ENCODE measurements at regions of chr14 and their contacts with region 1.

Region 1: GRCh38 chr14:75307700-75308379 is 29.2 kb downstream of the FOS start:
- DNase-seq: peak; percentile 77
- ATAC-seq: peak; percentile 59
- H3K4me3 Mint-ChIP-seq: no peak overlapping the region
- H3K27ac Mint-ChIP-seq: no peak overlapping the region
- H3K4me1 Mint-ChIP-seq: peaks cover 37% of the 10 kb centered on the region
- H3K27me3 Mint-ChIP-seq: peaks cover 3% of the 10 kb centered on the region

Region 2: GRCh38 chr14:75293920-75294642 is 13.8 kb before region 1 on chr14:
- CTCF ChIA-PET with region 1: interaction called, 17 read pairs
- DNase-seq: peak; percentile 95
- ATAC-seq: peak; percentile 90
- H3K4me3 Mint-ChIP-seq: peak overlapping the region; percentile 76
- H3K27ac Mint-ChIP-seq: peak overlapping the region; percentile 81
- H3K4me1 Mint-ChIP-seq: peaks cover 21% of the 10 kb centered on the region
- H3K27me3 Mint-ChIP-seq: peaks cover 22% of the 10 kb centered on the region

Region 3: DNA sequence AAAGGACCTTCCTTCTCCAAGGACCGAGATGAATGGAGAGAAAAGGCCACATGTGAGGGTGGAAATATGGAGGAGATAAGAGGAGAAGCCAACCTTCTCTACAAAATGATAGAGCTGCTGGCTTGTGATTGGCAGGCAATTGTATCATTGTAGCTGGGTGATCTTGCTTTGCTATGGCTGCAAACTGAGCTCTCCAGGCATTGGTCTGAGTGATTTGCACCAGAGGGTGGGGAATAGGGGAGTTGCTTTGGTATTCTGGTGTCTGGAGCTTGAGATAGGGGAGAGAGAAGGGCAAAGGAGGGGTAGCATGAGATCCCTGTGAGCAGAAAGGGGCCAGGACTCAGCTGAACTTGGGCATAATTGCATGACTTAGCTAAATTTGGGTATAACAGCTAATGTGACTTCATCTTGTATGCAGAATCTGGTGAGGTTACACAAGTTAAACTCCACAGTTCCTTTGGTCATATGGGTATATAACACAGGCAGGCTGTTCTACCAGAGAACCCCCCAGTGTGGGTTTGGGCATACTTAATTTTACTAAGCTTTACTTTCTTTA is 42.7 kb after region 1 on chr14:
- CTCF ChIA-PET with region 1: no interaction called
- DNase-seq: no peak
- ATAC-seq: no peak
- H3K4me3 Mint-ChIP-seq: no peak overlapping the region
- H3K27ac Mint-ChIP-seq: no peak overlapping the region
- H3K4me1 Mint-ChIP-seq: no peaks in the 10 kb centered on the region
- H3K27me3 Mint-ChIP-seq: no peaks in the 10 kb centered on the region

Region 4: GRCh38 chr14:75487155-75487671 is 179.4 kb after region 1 on chr14:
- CTCF ChIA-PET with region 1: interaction called, 157 read pairs
- DNase-seq: peak; percentile 61
- ATAC-seq: peak; percentile 84
- H3K4me3 Mint-ChIP-seq: no peak overlapping the region
- H3K27ac Mint-ChIP-seq: peak overlapping the region; percentile 73
- H3K4me1 Mint-ChIP-seq: peaks cover 42% of the 10 kb centered on the region
- H3K27me3 Mint-ChIP-seq: no peaks in the 10 kb centered on the region

Region 5: DNA sequence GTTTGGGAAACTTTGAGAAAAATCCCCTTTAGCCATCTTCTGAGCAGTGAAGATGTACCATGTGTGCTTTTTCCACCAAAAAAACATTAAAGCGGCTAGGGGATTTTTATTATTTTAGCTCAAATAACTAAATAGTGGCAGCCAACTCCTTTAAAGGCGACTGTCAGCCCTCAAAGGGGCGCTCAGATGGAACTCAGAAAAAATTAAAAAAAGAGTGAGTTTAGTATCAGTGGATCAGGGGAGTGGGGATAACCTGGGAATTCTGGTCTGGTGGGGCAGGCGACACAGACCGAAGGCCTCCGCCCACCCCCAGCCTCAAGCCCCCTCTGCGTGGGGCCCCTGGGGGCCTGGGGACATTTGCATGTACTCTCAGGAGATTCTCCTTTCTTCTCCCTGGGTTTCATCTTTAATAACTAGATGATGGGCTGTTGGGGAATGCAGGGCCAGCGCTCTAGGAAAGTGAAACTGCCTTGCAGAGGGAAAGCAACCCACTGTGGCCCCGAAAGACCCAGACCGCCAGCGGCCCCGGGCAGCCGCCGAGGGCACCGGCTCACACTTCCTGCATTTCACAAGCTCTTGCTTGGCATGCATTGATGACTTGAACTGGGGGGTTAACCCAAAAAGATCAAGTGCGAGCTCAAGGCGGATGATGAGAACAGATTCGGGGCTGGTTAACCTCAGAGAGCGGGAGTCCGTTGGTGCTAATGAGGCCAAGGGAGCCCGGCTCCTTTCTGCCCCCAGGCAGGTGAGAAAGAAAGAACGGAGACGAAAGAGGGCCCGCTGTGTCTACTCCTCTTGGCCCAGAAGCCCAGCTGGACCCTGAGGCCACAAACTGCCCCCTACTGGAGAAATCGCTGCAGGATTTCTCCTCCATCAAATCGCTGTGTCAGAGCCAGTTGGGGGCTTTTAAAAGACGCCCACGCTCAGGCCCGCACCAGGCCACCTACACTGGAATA is 207.1 kb after region 1 on chr14:
- CTCF ChIA-PET with region 1: interaction called, 14 read pairs
- DNase-seq: peak; percentile 81
- ATAC-seq: peak; percentile 76
- H3K4me3 Mint-ChIP-seq: peak overlapping the region; percentile 79
- H3K27ac Mint-ChIP-seq: peak overlapping the region; percentile 99
- H3K4me1 Mint-ChIP-seq: peaks cover 52% of the 10 kb centered on the region
- H3K27me3 Mint-ChIP-seq: no peaks in the 10 kb centered on the region

Region 6: GRCh38 chr14:75709207-75709812 is 401.5 kb after region 1 on chr14:
- CTCF ChIA-PET with region 1: no interaction called
- DNase-seq: peak; percentile 73
- ATAC-seq: peak; percentile 78
- H3K4me3 Mint-ChIP-seq: no peak overlapping the region
- H3K27ac Mint-ChIP-seq: no peak overlapping the region
- H3K4me1 Mint-ChIP-seq: no peaks in the 10 kb centered on the region
- H3K27me3 Mint-ChIP-seq: no peaks in the 10 kb centered on the region